H1 (cell line): ENCODE measurements at regions of chr1 and their contacts with region 1.

Region 1: GRCh38 chr1:6052543-6053205 is 7.0 kb downstream of the KCNAB2 start:
- DNase-seq: peak; percentile 41 to 85
- H3K4me3 ChIP-seq: peak overlapping the region in 2 of 4 experiments; percentile 10 to 46; a peak in 3 of 8 replicates
- H3K27ac ChIP-seq: no peak overlapping the region
- H3K4me1 ChIP-seq: peaks cover 2 to 6% (median 4%) of the 10 kb centered on the region in 4 experiments; a peak in 4 of 7 replicates
- H3K27me3 ChIP-seq: no peaks in the 10 kb centered on the region; a peak in 1 of 7 replicates
- CTCF ChIP-seq: peak in 2 of 3 experiments; percentile 66 to 79; a peak in 3 of 4 replicates
- EP300 ChIP-seq: no peak
- POLR2A ChIP-seq: no peak
- RAD21 ChIP-seq: peak; percentile 82 to 88

Region 2: DNA sequence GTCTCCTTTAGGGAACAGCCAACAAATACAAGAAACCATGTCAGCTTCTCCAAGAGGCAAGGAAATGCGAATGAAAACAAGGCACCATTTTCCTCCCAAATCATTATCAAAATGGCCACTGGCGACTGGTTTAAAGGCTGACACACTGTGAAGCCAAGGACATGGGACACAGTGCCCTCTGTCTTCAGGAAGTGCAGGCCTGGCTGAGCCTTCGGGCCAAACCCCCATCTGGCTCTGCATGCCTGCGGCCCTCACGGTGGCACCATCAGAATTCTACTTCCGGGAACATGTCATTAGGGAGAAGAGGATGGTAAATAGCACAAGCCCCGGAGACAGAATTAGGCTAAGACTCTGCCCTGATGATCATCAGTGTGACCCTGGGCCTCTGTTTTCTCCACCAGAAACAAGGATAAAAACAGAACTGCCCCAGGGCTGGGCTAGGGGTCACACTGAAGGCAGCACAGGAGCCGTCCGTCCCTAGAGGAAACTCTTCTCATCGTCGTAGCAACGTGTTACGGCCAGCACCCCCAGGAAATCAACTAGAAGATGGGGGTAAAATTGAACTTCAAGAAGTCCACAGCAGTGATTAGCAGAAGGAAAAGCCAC is 164.0 kb before region 1 on chr1:
- CTCF ChIA-PET with region 1: no interaction called
- POLR2A ChIA-PET with region 1: no interaction called
- DNase-seq: no peak
- H3K4me3 ChIP-seq: no peak overlapping the region
- H3K27ac ChIP-seq: no peak overlapping the region
- H3K4me1 ChIP-seq: no peaks in the 10 kb centered on the region
- H3K27me3 ChIP-seq: no peaks in the 10 kb centered on the region
- CTCF ChIP-seq: peak; percentile 12 to 53 (median 38); a peak in 3 of 4 replicates
- EP300 ChIP-seq: no peak
- POLR2A ChIP-seq: no peak
- RAD21 ChIP-seq: peak; percentile 16 to 38; a peak in 3 of 4 replicates

Region 3: GRCh38 chr1:6041432-6042062 is 11.1 kb before region 1 on chr1:
- CTCF ChIA-PET with region 1: interaction called, 43 read pairs
- POLR2A ChIA-PET with region 1: interaction called, 3 read pairs
- DNase-seq: peak in 1 of 2 experiments; percentile 92
- H3K4me3 ChIP-seq: no peak overlapping the region
- H3K27ac ChIP-seq: no peak overlapping the region
- H3K4me1 ChIP-seq: peaks cover 0 to 5% (median 3%) of the 10 kb centered on the region in 4 experiments; a peak in 3 of 7 replicates
- H3K27me3 ChIP-seq: no peaks in the 10 kb centered on the region; a peak in 1 of 7 replicates
- CTCF ChIP-seq: peak in 2 of 3 experiments; percentile 94 to 96; a peak in 3 of 4 replicates
- EP300 ChIP-seq: no peak
- POLR2A ChIP-seq: no peak
- RAD21 ChIP-seq: peak; percentile 88 to 92

Region 4: GRCh38 chr1:6075748-6076147 is 23.1 kb after region 1 on chr1:
- CTCF ChIA-PET with region 1: interaction called, 38 read pairs
- POLR2A ChIA-PET with region 1: no interaction called
- DNase-seq: no peak
- H3K4me3 ChIP-seq: no peak overlapping the region
- H3K27ac ChIP-seq: no peak overlapping the region
- H3K4me1 ChIP-seq: peaks cover 0 to 4% (median 1%) of the 10 kb centered on the region in 4 experiments; a peak in 4 of 7 replicates
- H3K27me3 ChIP-seq: 0 out of 7 replicates have a peak, but pooled peaks cover 0 to 2% (median 0%) of the 10 kb centered on the region in 4 experiments
- CTCF ChIP-seq: no peak
- EP300 ChIP-seq: no peak
- POLR2A ChIP-seq: no peak
- RAD21 ChIP-seq: no peak

Region 5: GRCh38 chr1:6097824-6098223 is 45.1 kb after region 1 on chr1:
- CTCF ChIA-PET with region 1: interaction called, 19 read pairs
- POLR2A ChIA-PET with region 1: no interaction called
- DNase-seq: no peak
- H3K4me3 ChIP-seq: no peak overlapping the region
- H3K27ac ChIP-seq: no peak overlapping the region
- H3K4me1 ChIP-seq: no peaks in the 10 kb centered on the region; a peak in 2 of 7 replicates
- H3K27me3 ChIP-seq: no peaks in the 10 kb centered on the region
- CTCF ChIP-seq: no peak
- EP300 ChIP-seq: no peak
- POLR2A ChIP-seq: no peak
- RAD21 ChIP-seq: no peak

Region 6: DNA sequence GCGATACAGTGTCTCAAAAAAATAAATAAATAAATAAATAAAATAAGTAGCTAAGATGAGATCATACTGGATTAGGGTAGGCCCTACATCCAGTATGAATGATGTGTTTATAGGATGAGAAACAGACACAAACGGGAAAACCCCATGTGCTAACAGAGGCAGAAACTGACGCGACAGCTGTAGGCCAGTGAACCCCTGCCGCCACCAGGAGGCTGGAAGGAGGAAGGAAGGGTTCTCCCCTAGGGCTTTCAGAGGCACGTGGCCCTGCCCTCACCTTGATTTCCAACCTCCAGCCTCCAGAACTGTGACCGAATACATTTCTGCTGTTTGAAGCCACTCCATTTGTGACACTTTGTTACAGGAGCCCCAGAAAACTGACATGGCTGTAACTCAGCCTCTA is 88.9 kb after region 1 on chr1:
- CTCF ChIA-PET with region 1: interaction called, 12 read pairs
- POLR2A ChIA-PET with region 1: no interaction called
- DNase-seq: peak in 1 of 2 experiments; percentile 67
- H3K4me3 ChIP-seq: no peak overlapping the region
- H3K27ac ChIP-seq: no peak overlapping the region
- H3K4me1 ChIP-seq: peaks cover 0 to 11% (median under 1%) of the 10 kb centered on the region in 4 experiments; a peak in 2 of 7 replicates
- H3K27me3 ChIP-seq: no peaks in the 10 kb centered on the region; a peak in 1 of 7 replicates
- CTCF ChIP-seq: peak; percentile 64 to 76 (median 70)
- EP300 ChIP-seq: no peak
- POLR2A ChIP-seq: no peak
- RAD21 ChIP-seq: peak; percentile 61 to 63